ENCODE measurements at regions of chr12 and their contacts with region 1.

Region 1: GRCh38 chr12:103884316-103884715 is 43.3 kb upstream of the NT5DC3 start:
- DNase-seq: no peak
- ATAC-seq: peak; percentile 20
- H3K4me3 ChIP-seq: no peak overlapping the region
- H3K27ac ChIP-seq: no peak overlapping the region
- H3K4me1 ChIP-seq: peaks cover 29% of the 10 kb centered on the region
- H3K27me3 ChIP-seq: no peaks in the 10 kb centered on the region
- CTCF ChIP-seq: peak; percentile 41 to 74 (median 63); a peak in 5 of 6 replicates
- EP300 ChIP-seq: no peak
- POLR2A ChIP-seq: no peak
- RAD21 ChIP-seq: peak; percentile 97

Region 2: DNA sequence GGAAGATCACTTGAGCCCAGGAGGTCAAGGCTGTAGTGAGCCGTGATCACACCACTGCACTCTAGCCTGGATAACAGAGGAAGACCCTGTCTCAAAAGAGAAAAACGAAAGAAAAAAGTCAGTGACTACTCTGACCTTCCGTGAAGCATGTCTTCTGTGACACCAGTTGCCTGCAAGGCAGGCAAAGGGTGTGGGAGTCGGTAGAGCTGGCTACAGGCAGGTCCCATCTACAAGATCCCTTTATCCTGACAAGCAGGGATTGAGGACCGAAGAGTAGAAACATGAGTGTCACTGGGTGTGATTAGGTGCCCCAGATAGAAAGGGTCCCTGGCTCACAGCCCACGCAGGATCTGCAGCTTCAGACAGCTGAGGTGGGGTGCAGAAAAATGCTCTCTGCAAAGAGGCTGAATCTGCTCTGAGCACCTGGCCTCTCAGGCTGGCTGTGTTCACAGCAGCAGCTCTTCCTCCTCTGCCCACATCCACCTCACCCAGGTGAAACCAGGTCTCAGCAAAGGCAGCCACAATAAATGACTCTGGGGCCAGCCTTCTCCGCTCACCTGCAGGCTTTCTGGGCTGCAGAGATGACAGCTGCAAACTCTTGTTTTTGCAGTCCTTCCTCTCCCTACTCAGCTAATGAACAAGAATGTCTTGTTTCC is 17.3 kb after region 1 on chr12:
- CTCF ChIA-PET with region 1: interaction called, 17 read pairs
- POLR2A ChIA-PET with region 1: no interaction called
- RAD21 ChIA-PET with region 1: interaction called, 7 read pairs
- SMC1A ChIA-PET with region 1: interaction called, 8 read pairs
- in situ Hi-C with region 1: no loop called
- intact Hi-C with region 1: no loop called
- DNase-seq: no peak
- ATAC-seq: peak; percentile 31
- H3K4me3 ChIP-seq: no peak overlapping the region
- H3K27ac ChIP-seq: no peak overlapping the region
- H3K4me1 ChIP-seq: peaks cover 9% of the 10 kb centered on the region
- H3K27me3 ChIP-seq: no peaks in the 10 kb centered on the region
- CTCF ChIP-seq: no peak
- EP300 ChIP-seq: no peak
- POLR2A ChIP-seq: no peak
- RAD21 ChIP-seq: no peak

Region 3: DNA sequence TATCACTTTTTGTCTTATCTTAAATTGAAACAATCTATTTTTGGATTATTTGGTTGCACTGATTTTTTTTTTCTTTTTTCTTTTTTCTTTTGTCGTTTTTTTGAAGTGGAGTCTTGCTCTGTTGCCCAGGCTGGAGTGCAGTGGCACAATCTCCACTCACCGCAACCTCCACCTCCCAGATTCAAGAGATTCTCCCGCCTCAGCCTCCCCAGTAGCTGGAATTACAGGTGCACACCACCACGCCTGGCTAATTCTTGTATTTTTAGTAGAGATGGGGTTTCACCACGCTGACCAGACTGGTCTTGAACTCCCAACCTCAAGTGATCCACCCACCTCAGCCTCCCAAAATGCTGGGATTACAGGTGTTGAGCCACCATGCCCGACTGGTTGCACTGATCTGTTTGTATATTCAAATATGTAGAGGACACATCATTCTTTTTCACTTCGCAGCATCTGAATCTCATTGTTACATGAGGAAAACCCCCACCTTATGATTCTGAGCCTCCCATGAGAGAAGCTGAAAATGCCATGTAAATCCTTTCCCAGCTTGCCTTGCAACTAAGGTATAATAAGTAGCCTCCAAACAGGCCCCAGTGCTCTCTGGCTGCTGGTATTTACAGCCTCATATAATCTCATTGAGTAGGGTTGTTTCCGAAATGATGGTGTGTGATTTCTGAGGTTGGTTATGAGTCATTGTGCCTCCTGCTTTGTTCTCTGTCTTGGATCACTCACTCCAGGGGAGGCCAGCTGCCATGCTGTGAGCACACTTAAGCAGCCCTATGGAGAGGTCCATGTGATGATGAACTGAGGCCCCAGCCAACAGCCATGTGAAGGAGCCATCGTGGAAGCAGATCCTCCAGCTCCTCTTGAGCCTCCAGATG is 40.7 kb after region 1 on chr12:
- CTCF ChIA-PET with region 1: interaction called, 21 read pairs
- POLR2A ChIA-PET with region 1: interaction called, 73 read pairs
- RAD21 ChIA-PET with region 1: interaction called, 121 read pairs
- SMC1A ChIA-PET with region 1: interaction called, 125 read pairs
- in situ Hi-C with region 1: no loop called
- intact Hi-C with region 1: loop called (anchors 2 kb)
- DNase-seq: peak; percentile 96
- ATAC-seq: peak; percentile 60
- H3K4me3 ChIP-seq: peak overlapping the region; percentile 56
- H3K27ac ChIP-seq: peak overlapping the region; percentile 74
- H3K4me1 ChIP-seq: peaks cover 24% of the 10 kb centered on the region
- H3K27me3 ChIP-seq: no peaks in the 10 kb centered on the region
- CTCF ChIP-seq: no peak
- EP300 ChIP-seq: peak; percentile 71 to 77; a peak in 2 of 4 replicates
- POLR2A ChIP-seq: peak; percentile 92
- RAD21 ChIP-seq: 0 out of 2 replicates have a peak, but pooled peaks have one; percentile 15

Region 4: GRCh38 chr12:103936679-103937078 is 52.4 kb after region 1 on chr12:
- CTCF ChIA-PET with region 1: interaction called, 15 read pairs
- POLR2A ChIA-PET with region 1: interaction called, 3 read pairs
- RAD21 ChIA-PET with region 1: interaction called, 7 read pairs
- SMC1A ChIA-PET with region 1: interaction called, 125 read pairs
- in situ Hi-C with region 1: no loop called
- intact Hi-C with region 1: no loop called
- DNase-seq: no peak
- ATAC-seq: peak; percentile 10
- H3K4me3 ChIP-seq: peak overlapping the region; percentile 39; the same call in 1 of the 2 replicates
- H3K27ac ChIP-seq: no peak overlapping the region
- H3K4me1 ChIP-seq: peaks cover 7% of the 10 kb centered on the region; the same call in 1 of the 2 replicates
- H3K27me3 ChIP-seq: no peaks in the 10 kb centered on the region
- CTCF ChIP-seq: no peak
- EP300 ChIP-seq: no peak
- POLR2A ChIP-seq: no peak
- RAD21 ChIP-seq: no peak

Region 5: GRCh38 chr12:103965590-103966504 is 81.5 kb after region 1 on chr12 and contains the start of gene TDG:
- CTCF ChIA-PET with region 1: interaction called, 8 read pairs
- POLR2A ChIA-PET with region 1: interaction called, 4 read pairs
- RAD21 ChIA-PET with region 1: interaction called, 25 read pairs
- SMC1A ChIA-PET with region 1: interaction called, 25 read pairs
- in situ Hi-C with region 1: no loop called
- intact Hi-C with region 1: loop called (anchors 5 kb)
- DNase-seq: peak; percentile 97
- ATAC-seq: peak; percentile 96
- H3K4me3 ChIP-seq: peak within 1 kb of the TSS; percentile 92
- H3K27ac ChIP-seq: peak within 1 kb of the TSS; percentile 94
- H3K4me1 ChIP-seq: peaks cover 10% of the 10 kb centered on the region
- H3K27me3 ChIP-seq: no peaks in the 10 kb centered on the region
- CTCF ChIP-seq: peak in 1 of 3 experiments; percentile 23; a peak in 1 of 6 replicates
- EP300 ChIP-seq: no peak
- POLR2A ChIP-seq: peak; percentile 96
- RAD21 ChIP-seq: no peak
- polyA plus RNA-seq, gene TDG: 29.7 to 33.7 TPM